H1 (cell line): ENCODE measurements at regions of chr6 and their contacts with region 1.

Region 1: DNA sequence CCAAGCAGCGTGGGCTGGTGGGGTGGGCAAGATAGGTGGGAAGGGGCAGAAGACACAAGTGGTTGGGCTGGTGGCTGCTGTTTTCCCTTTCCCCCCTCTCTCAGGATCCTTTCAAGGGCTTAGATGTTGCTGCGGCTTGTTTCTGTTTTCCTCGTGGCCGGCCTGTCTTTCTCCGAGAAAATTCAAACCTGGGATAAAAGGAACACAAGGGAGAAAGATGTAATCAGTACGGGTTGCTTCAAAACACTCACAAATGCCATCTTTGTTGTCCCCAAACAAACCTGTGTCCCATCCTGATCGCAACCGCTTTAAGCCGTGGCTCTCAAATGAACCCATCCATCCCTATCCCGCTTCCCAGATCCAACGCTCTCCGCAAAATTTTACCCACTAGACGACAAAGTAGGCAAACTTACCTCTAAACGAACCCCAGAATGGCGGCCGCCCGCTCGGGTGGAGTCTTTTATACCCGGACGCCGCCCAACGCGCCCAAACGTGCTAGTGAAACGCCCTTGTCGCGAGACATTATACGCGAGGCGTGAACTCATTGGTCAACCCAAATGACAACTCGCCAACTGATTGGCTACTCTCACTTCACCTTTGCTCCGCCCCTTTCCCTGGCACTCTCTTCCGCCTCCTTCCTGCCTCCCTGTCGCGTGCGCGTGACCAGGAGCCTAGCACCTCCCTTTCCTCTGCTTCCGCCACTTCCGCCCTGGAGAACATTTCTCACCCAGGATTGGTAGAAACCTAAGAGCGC is at the start of gene PPP1R10:
- DNase-seq: peak; percentile 99
- H3K4me3 ChIP-seq: peak within 1 kb of the TSS; percentile 90 to 97 (median 96)
- H3K27ac ChIP-seq: peak within 1 kb of the TSS; percentile 99
- H3K4me1 ChIP-seq: peaks cover 0 to 6% (median 4%) of the 10 kb centered on the region in 4 experiments; a peak in 4 of 7 replicates
- H3K27me3 ChIP-seq: no peaks in the 10 kb centered on the region
- CTCF ChIP-seq: no peak
- EP300 ChIP-seq: peak in 1 of 2 experiments; percentile 2; a peak in 1 of 3 replicates
- POLR2A ChIP-seq: peak; percentile 98 to 100
- RAD21 ChIP-seq: no peak
- total RNA-seq, gene PPP1R10: 78.9 and 89.1 TPM in 2 replicates

Region 2: DNA sequence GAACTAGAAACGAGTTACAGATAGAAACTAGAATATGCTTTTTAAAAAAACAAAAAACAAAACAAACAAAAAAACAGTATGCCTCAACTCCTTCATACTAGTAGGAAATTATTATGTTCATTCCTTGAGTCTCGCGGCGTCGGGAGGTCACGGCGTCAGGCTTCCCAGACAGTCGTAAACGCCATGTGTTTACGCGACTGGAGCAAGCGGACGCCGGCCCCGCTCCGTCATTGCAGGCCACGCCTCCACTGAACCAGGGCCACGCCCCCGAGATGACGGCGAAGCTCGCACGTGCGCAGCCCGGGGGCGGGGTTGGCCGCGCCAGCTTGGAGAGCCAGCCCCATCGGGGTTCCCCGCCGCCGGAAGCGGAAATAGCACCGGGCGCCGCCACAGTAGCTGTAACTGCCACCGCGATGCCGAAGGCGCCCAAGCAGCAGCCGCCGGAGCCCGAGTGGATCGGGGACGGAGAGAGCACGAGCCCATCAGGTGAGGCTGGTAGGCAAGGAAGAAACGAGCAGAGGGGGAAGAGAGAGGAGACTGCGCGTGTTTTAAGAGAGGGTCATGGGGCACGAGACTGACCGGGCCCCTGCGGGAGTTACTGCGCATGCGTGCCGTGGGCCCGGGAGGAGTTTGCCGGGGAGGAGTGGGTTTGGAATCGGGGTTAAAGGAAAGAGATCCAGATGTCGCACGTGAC is 45.8 kb before region 1 on chr6 and contains the start of gene ABCF1:
- CTCF ChIA-PET with region 1: no interaction called
- POLR2A ChIA-PET with region 1: interaction called, 36 read pairs
- DNase-seq: peak; percentile 90 to 100
- H3K4me3 ChIP-seq: peak within 1 kb of the TSS; percentile 88 to 98 (median 95)
- H3K27ac ChIP-seq: peak within 1 kb of the TSS; percentile 95
- H3K4me1 ChIP-seq: peaks cover 0 to 4% (median 2%) of the 10 kb centered on the region in 4 experiments; a peak in 5 of 7 replicates
- H3K27me3 ChIP-seq: no peaks in the 10 kb centered on the region
- CTCF ChIP-seq: no peak
- EP300 ChIP-seq: no peak
- POLR2A ChIP-seq: peak in 1 of 2 experiments; percentile 94; a peak in 2 of 3 replicates
- RAD21 ChIP-seq: no peak
- total RNA-seq, gene ABCF1: 119 and 123 TPM in 2 replicates

Region 3: DNA sequence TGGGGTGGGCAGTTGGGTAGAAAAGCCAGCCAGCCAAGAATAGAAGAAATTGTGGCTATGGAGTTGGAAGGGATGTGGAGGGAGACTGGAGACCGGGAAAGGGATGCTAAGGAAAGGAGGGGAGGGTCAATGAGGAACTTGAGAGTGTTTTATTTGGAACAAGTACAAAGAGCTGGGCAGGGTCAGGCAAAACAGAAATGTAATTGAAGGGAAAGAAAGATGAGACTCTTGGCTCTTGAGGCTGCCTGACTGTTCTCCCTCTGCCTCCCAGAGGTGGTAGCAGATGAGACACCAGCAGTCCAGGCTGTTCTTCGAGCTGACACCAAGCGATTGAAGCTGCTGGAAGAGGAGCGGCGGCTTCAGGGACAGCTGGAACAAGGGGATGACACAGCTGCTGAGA is 33.1 kb before region 1 on chr6:
- CTCF ChIA-PET with region 1: interaction called, 5 read pairs
- POLR2A ChIA-PET with region 1: interaction called, 443 read pairs
- DNase-seq: no peak
- H3K4me3 ChIP-seq: no peak overlapping the region
- H3K27ac ChIP-seq: no peak overlapping the region
- H3K4me1 ChIP-seq: no peaks in the 10 kb centered on the region
- H3K27me3 ChIP-seq: no peaks in the 10 kb centered on the region
- CTCF ChIP-seq: no peak
- EP300 ChIP-seq: no peak
- POLR2A ChIP-seq: 0 out of 3 replicates have a peak, but pooled peaks of 1 of the 2 experiments have one; percentile 10
- RAD21 ChIP-seq: no peak

Region 4: GRCh38 chr6:30600451-30600961 is 16.5 kb before region 1 on chr6:
- CTCF ChIA-PET with region 1: interaction called, 17 read pairs
- POLR2A ChIA-PET with region 1: interaction called, 443 read pairs
- DNase-seq: no peak
- H3K4me3 ChIP-seq: no peak overlapping the region
- H3K27ac ChIP-seq: no peak overlapping the region
- H3K4me1 ChIP-seq: no peaks in the 10 kb centered on the region
- H3K27me3 ChIP-seq: no peaks in the 10 kb centered on the region
- CTCF ChIP-seq: no peak
- EP300 ChIP-seq: no peak
- POLR2A ChIP-seq: no peak
- RAD21 ChIP-seq: no peak

Region 5: GRCh38 chr6:30646458-30647241 is 29.7 kb after region 1 on chr6 and contains the start of gene C6orf136:
- CTCF ChIA-PET with region 1: interaction called, 3 read pairs
- POLR2A ChIA-PET with region 1: interaction called, 27 read pairs
- DNase-seq: peak; percentile 75 to 87
- H3K4me3 ChIP-seq: peak within 1 kb of the TSS; percentile 74 to 91 (median 85)
- H3K27ac ChIP-seq: peak within 1 kb of the TSS; percentile 66
- H3K4me1 ChIP-seq: peaks cover 0 to 6% (median 4%) of the 10 kb centered on the region in 4 experiments; a peak in 5 of 7 replicates
- H3K27me3 ChIP-seq: no peaks in the 10 kb centered on the region
- CTCF ChIP-seq: no peak
- EP300 ChIP-seq: no peak
- POLR2A ChIP-seq: no peak
- RAD21 ChIP-seq: no peak
- total RNA-seq, gene C6orf136: 18.2 and 20.8 TPM in 2 replicates

Region 6: DNA sequence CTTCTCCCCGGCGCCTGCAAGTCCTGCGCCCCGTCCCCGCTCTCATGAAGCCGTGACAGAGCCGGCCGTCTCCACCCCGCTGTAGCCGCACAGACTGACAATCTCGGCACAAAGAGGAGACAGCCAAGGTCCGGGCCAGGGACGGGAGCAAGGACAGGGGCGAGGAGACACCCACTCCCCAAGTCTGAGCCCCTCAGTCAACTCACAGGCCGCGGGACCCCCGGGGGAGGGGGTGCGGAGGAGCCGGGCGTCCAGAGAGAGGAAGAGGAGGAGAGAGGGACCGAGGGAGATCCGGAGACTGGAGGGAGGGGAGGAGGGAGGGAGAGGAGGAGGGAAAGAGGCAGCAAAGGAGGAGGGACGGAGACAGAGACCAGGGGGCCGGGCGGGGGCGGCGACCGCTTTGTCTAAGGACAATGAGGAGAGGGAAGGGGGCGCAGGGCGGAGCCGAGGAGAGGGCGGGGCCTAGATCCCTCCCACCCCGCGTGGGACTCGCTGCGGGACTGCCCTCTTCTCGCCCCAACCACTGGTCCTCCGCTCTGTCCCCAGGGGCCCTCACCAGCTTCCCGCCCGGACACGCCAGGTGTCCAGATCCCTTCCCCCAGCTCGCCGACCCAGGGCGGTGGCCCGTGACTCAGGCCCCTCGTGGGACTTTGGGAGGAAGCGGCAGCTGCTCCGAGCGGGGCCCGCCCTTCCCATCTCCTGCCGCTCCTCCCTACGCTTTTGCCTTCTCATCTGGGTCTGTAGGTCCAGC is 70.1 kb after region 1 on chr6:
- CTCF ChIA-PET with region 1: no interaction called
- POLR2A ChIA-PET with region 1: interaction called, 21 read pairs
- DNase-seq: peak in 1 of 2 experiments; percentile 92
- H3K4me3 ChIP-seq: peak overlapping the region; percentile 49 to 97 (median 80)
- H3K27ac ChIP-seq: peak overlapping the region; percentile 35; the same call in 1 of the 2 replicates
- H3K4me1 ChIP-seq: peaks cover 7 to 49% (median 32%) of the 10 kb centered on the region in 4 experiments
- H3K27me3 ChIP-seq: no peaks in the 10 kb centered on the region
- CTCF ChIP-seq: no peak
- EP300 ChIP-seq: peak in 1 of 2 experiments; percentile 94; a peak in 1 of 3 replicates
- POLR2A ChIP-seq: no peak; a peak in 1 of 3 replicates
- RAD21 ChIP-seq: no peak